Left cardiac atrium (tissue), 4 donors: ENCODE measurements at regions of chr1 and their contacts with region 1.

Region 1: DNA sequence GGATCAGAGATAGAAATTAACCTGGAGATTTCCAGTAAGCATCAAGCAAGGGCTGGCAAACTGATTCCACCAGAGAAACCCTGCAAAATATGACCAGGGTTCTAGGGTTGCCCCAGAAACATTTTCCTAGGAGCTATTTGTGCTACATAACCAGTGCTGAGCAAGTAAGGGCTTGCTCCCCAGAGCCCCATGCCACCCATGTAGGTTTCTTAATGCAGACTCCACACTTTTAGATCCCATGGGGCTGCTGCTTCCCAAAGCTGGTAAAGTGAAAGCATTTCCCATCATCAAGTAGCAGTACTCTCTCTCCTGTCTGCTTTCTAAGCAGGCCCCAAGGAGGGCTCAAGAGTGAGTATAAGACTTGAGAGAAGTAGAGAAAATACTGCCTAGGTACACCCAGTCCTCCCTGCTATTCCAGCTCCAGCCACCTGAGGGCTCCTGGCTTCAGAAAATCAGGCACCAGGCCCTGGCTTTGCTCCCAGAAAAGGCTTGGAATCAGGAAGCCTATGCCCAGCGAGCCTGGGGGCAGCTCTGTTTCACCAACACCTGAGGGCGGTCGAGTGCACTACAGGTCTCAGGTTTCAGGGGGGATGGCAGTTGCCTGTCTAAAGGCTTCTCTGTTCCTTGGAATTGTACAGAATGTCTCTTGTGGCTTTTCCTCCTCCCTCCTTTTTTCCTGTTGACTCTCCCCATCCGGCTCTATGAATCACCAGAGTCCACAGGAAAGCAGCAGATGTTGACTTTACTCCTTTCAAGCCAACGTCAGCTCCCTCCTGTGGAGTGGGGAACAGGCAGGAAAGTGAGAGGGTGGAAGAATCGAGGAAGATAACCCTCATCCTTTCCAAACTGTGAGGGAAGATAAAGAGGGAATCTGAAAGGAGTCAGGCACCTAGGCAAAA is 6.2 kb upstream of the ANKRD35 start:
- DNase-seq: peak; percentile 93
- ATAC-seq: peak; percentile 93

Region 2: DNA sequence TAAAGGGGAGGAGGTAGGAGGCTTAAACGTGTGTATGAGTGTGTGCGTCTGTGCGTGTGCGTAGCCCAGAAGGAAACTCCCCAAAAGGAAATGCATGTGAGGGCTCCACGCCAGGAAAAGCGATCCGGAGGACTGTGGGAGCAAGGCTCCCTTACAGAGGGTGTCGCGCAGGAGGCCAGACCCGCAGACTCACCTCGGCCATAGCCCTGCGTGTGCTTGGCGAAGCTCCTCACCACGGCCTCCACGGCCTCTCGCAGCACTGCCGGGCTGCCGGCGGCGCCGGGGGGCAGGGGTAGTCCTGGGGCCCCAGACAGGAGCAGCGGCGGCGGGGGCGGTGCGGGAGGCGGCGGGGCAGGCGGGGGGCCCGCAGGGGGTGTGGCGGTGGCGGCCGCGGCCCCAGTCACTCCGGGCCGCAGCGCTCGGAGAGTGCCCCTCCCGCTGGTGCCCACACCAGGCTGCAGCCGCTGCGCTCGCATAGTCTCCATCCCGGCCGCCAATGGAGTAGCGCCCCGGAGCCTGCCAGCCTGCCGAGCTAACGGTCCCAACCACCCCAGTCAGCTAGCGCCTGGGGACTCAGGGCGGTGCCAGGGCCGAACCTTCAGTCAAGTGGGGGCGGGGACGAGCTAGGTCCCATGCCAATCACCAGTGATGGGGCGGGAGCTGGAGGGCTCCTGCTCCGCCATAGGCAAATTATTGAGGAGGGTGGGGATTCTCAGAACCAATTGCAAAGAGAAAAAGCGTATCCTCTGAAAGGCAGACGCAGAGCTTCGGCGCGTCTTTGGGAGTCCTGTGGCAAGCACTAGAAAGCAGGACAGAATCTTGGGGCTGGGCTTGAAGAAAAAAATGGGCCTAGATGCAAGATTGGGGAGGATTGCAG is 65.8 kb after region 1 on chr1 and contains the start of gene LIX1L:
- intact Hi-C with region 1: loop called in 1 of 2 experiments (anchors 5 kb)
- DNase-seq: peak; percentile 96
- ATAC-seq: peak; percentile 87 to 89
- total RNA-seq, gene LIX1L: 25.7 to 32.3 TPM

Region 3: DNA sequence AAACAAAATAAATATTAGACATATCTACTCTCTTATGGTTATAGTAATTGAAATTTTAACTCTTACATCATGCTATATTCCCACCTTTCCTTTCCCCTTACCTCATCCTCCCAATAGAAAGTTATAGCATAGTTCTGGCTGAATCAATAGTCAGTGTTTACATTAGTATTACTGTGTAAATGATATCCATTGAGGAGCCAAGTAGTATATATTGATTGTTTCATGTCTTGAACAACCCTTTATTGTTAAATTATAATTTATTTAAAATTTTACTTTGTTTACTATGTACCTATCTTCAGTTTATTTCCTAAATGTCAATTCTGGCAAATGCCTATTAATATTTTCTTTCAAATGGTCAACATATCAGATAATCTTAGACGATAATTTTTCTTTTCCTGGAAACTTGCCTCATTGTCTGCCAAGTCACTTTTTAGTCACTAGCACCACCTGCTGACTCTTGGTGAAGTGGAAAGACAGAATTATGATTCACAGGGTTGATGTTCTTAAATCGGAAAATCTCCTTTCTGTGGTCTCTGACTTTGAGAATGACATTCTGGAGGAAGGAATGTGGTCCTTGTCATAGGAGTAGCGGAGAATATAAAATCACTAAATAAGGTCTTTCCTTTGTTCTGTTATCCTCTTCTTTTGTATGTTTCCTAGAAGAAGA is 121.0 kb after region 1 on chr1:
- intact Hi-C with region 1: loop called (anchors 5 kb)
- DNase-seq: no peak
- ATAC-seq: peak; percentile 48 to 50